BJ (cell line): ENCODE measurements at regions of chr2 and their contacts with region 1.

Region 1: GRCh38 chr2:109510136-109511028 is 103.4 kb downstream of the SEPTIN10 start:
- DNase-seq: no peak
- H3K4me3 ChIP-seq: no peak overlapping the region
- H3K27me3 ChIP-seq: no peaks in the 10 kb centered on the region; the same call in 1 of the 2 replicates
- CTCF ChIP-seq: peak; percentile 95

Region 2: DNA sequence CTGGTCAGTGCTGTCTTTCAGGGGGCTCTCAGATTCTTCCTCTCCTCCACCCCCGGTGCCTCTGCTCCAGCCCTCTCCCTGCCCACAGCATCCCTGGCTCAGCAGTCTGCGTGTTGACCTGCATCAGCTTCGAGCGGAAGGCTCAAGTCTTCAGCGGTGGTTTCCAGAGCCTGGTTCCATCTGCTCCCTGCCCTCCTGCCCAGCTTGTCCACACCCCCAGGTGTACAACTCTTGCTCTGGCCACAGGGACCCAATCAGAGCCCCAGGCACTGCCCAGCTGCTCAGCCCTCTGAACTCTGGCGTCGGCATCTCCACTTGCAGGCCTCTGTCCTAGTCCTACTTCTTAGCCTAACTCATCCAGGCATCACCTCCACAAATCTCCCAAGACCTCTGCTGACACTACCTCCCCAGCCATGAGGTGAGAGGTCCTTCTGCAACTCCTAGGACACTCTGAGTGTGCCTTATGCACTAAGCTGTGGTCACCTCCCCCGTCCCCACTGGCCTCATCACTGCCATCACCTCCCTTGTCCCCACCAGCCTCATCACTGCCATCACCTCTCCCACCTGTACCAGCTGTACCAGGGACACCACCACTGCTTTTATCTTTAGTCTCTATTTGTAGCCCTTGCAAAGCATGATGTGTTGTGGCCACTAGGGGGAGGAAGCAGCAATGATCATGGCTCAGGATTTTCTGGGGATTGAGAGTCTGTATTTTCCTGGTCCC is 582.3 kb before region 1 on chr2:
- CTCF ChIA-PET with region 1: interaction called, 17 read pairs
- POLR2A ChIA-PET with region 1: no interaction called
- DNase-seq: no peak
- H3K4me3 ChIP-seq: no peak overlapping the region
- H3K27me3 ChIP-seq: peaks cover 21% of the 10 kb centered on the region
- CTCF ChIP-seq: peak; percentile 90

Region 3: DNA sequence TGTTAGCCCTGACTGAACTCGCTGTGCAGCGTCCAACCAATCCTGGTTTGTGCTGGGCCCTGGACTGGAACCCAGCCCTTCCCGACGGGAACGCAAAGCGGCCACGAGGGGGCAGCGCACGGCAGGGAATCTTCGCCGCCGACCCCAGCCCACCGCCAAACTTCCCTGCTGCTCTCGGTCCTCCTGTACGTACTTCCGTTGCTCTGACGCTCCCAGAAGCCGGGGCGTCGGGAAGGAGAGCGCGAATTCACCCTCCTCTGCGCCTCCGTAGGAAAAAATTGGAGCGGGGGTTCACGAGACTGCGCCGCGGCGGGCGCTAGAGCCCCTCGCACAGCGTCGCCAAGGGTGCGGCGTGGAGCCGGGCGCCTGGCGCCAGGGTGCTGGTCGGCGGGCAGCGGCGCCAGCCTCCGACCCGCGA is 382.3 kb before region 1 on chr2:
- CTCF ChIA-PET with region 1: interaction called, 120 read pairs
- POLR2A ChIA-PET with region 1: no interaction called
- DNase-seq: no peak
- H3K4me3 ChIP-seq: peak overlapping the region; percentile 69
- H3K27me3 ChIP-seq: peaks cover under 1% of the 10 kb centered on the region
- CTCF ChIP-seq: peak; percentile 87

Region 4: GRCh38 chr2:109322111-109322510 is 188.3 kb before region 1 on chr2:
- CTCF ChIA-PET with region 1: interaction called, 14 read pairs
- POLR2A ChIA-PET with region 1: no interaction called
- DNase-seq: peak; percentile 96
- H3K4me3 ChIP-seq: no peak overlapping the region
- H3K27me3 ChIP-seq: no peaks in the 10 kb centered on the region
- CTCF ChIP-seq: no peak

Region 5: DNA sequence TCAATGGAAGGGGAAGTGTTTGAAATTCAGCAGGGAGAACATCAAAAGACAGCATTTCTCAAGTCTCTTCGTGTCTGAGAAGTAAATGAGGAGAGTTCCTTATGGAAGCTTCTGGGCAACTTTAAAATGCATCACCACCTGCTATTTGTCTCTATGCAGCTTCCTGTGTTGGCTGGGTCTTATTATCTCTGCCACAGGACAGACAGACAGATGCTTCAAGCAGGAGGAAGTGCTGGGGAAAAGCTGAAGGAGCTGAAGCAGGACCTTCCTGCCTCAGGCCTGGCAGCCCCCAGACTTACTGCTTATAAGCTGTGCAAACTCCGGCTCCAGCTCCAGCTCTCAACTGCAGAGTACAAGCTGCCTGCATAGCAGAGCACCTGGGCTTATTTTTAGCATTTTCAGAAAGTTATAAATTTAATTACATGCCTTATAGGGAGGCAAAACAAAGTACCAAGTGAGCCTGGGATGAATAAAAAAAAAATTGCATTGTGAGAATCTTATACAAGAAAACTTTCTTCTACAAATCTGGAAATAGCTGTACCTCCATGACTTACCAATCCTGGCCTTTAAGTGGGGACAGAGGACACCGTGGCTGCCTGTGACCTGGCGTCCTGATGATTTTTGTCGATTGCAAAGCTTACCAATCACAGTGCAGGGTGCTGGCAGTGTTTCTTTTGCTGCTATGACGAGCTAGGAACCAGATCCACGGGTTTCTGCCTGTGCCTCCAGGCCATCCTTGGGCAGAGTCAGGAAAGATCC is 102.9 kb before region 1 on chr2:
- CTCF ChIA-PET with region 1: interaction called, 14 read pairs
- POLR2A ChIA-PET with region 1: no interaction called
- DNase-seq: no peak
- H3K4me3 ChIP-seq: no peak overlapping the region
- H3K27me3 ChIP-seq: no peaks in the 10 kb centered on the region
- CTCF ChIP-seq: no peak

Region 6: GRCh38 chr2:109448946-109449788 is 61.2 kb before region 1 on chr2:
- CTCF ChIA-PET with region 1: interaction called, 11 read pairs
- POLR2A ChIA-PET with region 1: no interaction called
- DNase-seq: no peak
- H3K4me3 ChIP-seq: no peak overlapping the region
- H3K27me3 ChIP-seq: no peaks in the 10 kb centered on the region
- CTCF ChIP-seq: no peak

Region 7: DNA sequence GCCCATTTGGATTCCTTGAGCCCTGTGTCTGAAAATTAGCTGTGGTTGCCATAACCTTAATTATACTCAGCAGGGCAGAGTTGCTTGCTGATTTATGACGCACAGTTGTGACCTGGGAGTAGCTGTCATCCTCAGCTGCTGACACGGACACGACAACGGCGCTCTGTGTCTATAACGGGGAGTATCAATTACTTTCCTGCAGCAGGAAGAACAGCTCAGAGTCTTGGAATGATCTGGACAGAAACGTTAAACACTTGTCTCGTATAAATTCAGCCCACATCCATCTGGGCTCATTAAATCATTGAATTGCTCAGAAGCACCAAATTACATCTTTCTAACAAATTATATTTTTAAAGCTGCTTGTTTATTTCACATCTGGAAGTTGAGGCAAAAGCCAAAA is 12.9 kb before region 1 on chr2:
- CTCF ChIA-PET with region 1: interaction called, 16 read pairs
- POLR2A ChIA-PET with region 1: no interaction called
- DNase-seq: peak; percentile 86
- H3K4me3 ChIP-seq: no peak overlapping the region
- H3K27me3 ChIP-seq: no peaks in the 10 kb centered on the region
- CTCF ChIP-seq: no peak